HEK293T (cell line): ENCODE measurements at regions of chr22 and their contacts with region 1.

Region 1: GRCh38 chr22:36856121-36856791 is 4.5 kb upstream of the NCF4 start:
- DNase-seq: peak; percentile 93

Region 2: DNA sequence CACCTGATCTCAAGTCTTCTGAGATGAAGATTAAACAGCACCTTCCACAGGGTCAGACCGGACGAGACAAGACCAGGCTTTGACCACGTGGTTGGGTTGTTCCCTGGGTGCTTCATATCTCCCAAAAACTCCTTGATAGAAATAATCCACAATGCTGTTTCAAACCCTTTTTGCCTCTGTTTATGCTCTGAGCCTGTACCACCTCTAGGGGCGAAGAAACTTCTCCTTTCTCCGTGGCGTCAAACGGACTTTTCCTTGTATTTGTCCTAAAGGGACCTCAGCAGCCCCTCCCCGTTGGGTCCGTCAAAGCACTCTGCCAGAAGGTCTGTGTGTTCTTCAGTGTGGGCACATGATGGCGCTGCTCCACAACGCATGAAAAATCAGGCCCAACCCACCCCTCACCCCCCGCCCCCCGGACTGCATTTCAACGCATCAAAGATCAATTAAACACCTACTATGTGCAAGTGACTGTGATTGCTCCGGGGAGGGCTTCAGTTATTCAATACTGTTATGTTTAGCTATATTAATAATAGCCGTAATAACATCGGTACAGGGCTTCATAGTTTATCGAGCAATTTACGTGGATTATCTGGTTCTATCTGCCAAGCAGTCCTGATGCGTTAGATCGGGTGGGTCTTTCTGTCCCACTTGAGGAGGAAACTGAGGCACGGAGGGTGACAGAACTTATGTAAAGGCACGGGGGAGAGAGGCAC is 310.0 kb before region 1 on chr22:
- CTCF ChIA-PET with region 1: interaction called, 11 read pairs
- POLR2A ChIA-PET with region 1: no interaction called
- DNase-seq: peak; percentile 91

Region 3: GRCh38 chr22:36871406-36872081 is 15.3 kb after region 1 on chr22:
- CTCF ChIA-PET with region 1: interaction called, 19 read pairs
- POLR2A ChIA-PET with region 1: no interaction called
- DNase-seq: no peak

Region 4: DNA sequence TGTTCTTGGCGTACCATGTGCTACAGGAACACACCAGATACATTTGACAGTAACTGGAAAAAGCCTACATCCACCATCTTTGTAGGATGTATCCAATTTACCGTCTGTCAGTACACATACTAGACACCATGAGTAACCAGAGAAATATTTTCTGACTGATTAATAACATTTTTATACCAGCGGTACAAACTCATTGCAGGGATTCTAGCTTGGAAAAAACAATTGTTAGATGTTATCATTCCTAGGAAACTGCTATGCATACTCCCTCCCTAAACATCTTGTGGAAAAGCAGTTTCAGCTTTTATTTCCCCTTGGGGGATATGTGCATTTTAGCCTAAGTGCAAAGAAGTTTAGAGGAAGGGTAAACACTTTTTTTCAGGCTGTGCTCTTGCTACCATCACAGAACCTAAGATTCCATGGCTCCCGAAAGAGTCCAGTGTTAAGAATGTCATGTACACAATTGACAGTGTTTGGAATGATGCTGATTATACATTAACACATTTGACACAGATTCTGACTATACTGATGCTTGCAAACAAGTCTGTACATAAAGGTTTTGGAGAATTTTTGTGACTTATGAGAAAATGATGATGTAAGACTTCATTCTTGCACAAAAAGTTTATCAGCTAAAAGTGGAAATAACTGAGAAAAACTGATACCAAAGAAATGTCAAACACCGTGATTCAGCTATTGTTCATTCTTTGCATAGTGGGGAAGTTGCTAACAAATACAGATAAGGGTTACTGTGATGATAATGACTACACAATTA is 28.3 kb after region 1 on chr22:
- CTCF ChIA-PET with region 1: no interaction called
- POLR2A ChIA-PET with region 1: no interaction called
- DNase-seq: no peak